ENCODE measurements at regions of chr2 and their contacts with region 1.

Region 1: DNA sequence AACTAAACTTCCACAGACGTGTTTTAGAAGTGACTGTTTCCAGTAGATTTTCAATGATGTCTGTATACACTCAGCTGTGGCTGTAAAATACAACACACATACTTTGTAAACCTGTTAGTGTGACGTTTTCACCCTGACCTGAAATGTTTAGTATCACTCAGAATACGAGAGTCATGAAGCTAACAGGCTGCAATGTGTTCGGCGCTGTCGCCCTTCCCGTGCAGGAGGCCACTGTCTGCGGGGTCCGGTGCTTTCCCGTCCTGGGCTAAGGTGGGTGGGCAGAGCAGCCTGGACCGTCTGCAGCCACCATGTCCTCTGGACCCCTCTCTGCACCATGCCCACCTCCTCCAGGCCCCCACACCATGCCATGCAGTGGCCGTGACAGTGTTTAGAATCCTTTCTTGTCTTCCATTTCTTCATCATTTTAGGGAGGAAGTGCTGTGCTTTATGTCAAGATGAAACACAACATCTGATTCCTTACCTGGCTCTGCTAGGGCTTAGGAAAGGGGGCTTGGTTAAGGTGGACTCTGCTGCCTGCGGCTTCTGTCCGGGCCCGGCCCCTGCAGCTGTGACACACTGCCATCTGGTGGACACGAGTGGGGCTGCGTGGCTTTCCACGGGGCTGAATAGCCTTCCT is 53.8 kb upstream of the RBM44 start:
- DNase-seq: peak; percentile 83 to 90
- H3K4me3 ChIP-seq: no peak overlapping the region
- H3K27ac ChIP-seq: peak overlapping the region; percentile 30 to 87 (median 57)
- H3K4me1 ChIP-seq: peaks cover 29 to 67% (median 49%) of the 10 kb centered on the region in 4 donors
- H3K27me3 ChIP-seq: no peaks in the 10 kb centered on the region
- CTCF ChIP-seq: peak in 6 of 7 experiments; percentile 65 to 96 (median 95)
- EP300 ChIP-seq: no peak
- POLR2A ChIP-seq: no peak

Region 2: GRCh38 chr2:237207646-237208045 is 537.1 kb before region 1 on chr2:
- intact Hi-C with region 1: no loop called
- DNase-seq: peak in 1 of 2 donors; percentile 23
- H3K4me3 ChIP-seq: no peak overlapping the region
- H3K27ac ChIP-seq: peak overlapping the region in 3 of 5 donors; percentile 31 to 76 (median 43)
- H3K4me1 ChIP-seq: peaks cover 0 to 14% (median 8%) of the 10 kb centered on the region in 4 donors
- H3K27me3 ChIP-seq: no peaks in the 10 kb centered on the region
- CTCF ChIP-seq: no peak
- EP300 ChIP-seq: no peak
- POLR2A ChIP-seq: no peak

Region 3: GRCh38 chr2:237581751-237582746 is 162.7 kb before region 1 on chr2:
- intact Hi-C with region 1: loop called (anchors 10 kb)
- DNase-seq: peak; percentile 84 to 85
- H3K4me3 ChIP-seq: peak overlapping the region in 1 of 4 donors; percentile 16
- H3K27ac ChIP-seq: peak overlapping the region; percentile 61 to 85 (median 77)
- H3K4me1 ChIP-seq: peaks cover 18 to 35% (median 25%) of the 10 kb centered on the region in 4 donors
- H3K27me3 ChIP-seq: no peaks in the 10 kb centered on the region
- CTCF ChIP-seq: peak in 3 of 7 experiments; percentile 17 to 34 (median 27)
- EP300 ChIP-seq: no peak
- POLR2A ChIP-seq: no peak

Region 4: GRCh38 chr2:237674731-237675276 is 69.9 kb before region 1 on chr2:
- intact Hi-C with region 1: loop called (anchors 5 kb)
- DNase-seq: peak; percentile 84 to 96
- H3K4me3 ChIP-seq: peak overlapping the region; percentile 14 to 30 (median 24)
- H3K27ac ChIP-seq: peak overlapping the region; percentile 34 to 84 (median 82)
- H3K4me1 ChIP-seq: peaks cover 40 to 75% (median 63%) of the 10 kb centered on the region in 4 donors
- H3K27me3 ChIP-seq: no peaks in the 10 kb centered on the region
- CTCF ChIP-seq: peak in 2 of 7 experiments; percentile 19 to 25
- EP300 ChIP-seq: peak; percentile 15
- POLR2A ChIP-seq: no peak